ENCODE measurements at regions of chr16 and their contacts with region 1.

Region 1: DNA sequence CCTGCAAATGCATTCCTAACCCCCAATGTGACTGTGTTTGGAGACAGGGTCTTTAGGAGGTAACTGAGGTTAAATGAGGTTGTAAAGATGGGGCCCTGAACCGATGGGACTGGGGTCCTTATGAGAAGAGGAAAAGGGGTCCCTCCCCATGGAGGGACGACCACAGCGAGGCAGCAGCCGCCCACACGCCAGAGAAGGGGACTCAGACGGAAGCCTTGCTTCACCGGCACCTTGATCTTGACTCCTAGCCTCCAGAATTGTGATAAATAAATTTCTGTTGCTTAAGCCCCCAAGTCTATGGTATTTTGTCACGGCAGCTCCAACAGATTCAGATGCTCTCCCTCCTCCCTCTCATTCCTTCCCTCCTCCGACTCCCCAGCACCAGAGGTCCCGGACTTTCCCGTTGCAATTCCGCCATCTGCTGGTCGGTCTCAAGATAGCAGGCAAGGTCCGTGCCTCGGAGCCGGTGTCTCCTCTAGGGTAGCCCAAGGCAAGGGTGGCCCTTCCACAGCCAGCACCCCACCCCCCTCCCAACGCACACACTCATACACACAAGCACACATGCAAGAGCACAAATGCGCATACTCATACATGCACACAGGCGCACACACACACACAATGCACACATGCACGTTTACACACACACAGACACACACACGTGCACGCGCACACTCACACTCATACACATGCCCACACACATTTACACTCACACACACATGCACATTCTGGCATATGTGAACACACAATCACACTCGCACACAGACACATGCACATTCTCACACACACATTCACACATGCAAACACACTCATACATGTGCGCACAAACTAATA is 23.1 kb upstream of the C16orf78 start:
- DNase-seq: peak; percentile 48 to 70 (median 62)
- H3K4me3 ChIP-seq: no peak overlapping the region
- H3K27ac ChIP-seq: no peak overlapping the region
- H3K4me1 ChIP-seq: no peaks in the 10 kb centered on the region
- H3K27me3 ChIP-seq: peaks cover 4% of the 10 kb centered on the region
- CTCF ChIP-seq: peak; percentile 80

Region 2: DNA sequence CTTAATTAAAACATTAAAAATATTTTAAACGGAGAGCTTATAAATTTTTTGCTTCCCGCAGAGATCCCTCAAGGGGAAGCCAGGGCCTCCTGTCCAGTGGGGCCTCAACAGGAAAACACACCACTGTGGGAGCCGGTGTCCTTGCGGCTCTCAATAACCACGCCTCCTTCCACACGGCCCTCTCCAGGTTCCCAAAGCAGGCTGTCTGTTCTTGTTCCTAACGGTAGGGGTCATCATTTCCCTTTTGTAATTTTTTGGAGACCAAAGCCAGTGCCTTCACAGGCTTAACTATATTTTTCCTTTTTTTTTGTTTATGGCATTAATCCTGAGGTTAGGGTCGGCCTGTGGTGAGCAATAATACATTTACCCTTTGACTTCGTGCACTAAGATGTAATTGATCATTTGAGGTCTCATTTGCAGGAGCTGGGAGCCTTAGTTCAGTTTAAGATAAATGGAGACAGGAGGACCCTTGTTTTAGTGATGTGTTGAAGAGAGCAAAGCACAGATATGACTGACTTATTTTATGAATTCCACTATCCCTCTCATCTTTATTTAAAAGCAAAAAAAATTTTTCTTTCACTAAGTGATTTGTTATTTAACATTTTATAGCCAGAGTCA is 663.0 kb before region 1 on chr16:
- intact Hi-C with region 1: loop called (anchors 10 kb)
- DNase-seq: peak in 4 of 5 donors; percentile 52 to 84 (median 68)
- H3K4me3 ChIP-seq: no peak overlapping the region
- H3K27ac ChIP-seq: no peak overlapping the region
- H3K4me1 ChIP-seq: no peaks in the 10 kb centered on the region
- H3K27me3 ChIP-seq: no peaks in the 10 kb centered on the region
- CTCF ChIP-seq: peak; percentile 64